ENCODE measurements at regions of chr14 and their contacts with region 1.

Region 1: DNA sequence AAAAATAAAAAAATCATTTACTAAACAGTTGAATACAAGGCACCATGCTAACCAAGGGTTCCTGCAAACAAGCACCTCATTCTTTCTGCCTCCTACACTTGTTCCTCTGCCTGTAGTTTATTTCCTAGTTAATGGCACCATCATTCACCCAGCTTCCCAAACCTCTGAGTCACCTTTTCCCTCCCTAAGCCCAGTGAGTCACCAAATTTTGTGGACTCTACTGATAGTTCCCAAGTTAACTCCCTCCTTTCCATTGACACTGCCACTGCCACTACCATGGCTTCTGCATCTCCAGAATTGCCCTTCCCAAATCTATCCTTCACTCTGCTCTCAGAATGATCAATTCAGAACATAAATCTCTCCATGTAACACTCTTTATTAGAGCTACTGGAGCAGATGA is 2.0 kb upstream of the GARIN2 start:
- DNase-seq: peak; percentile 55
- H3K4me3 ChIP-seq: no peak overlapping the region
- CTCF ChIP-seq: no peak

Region 2: DNA sequence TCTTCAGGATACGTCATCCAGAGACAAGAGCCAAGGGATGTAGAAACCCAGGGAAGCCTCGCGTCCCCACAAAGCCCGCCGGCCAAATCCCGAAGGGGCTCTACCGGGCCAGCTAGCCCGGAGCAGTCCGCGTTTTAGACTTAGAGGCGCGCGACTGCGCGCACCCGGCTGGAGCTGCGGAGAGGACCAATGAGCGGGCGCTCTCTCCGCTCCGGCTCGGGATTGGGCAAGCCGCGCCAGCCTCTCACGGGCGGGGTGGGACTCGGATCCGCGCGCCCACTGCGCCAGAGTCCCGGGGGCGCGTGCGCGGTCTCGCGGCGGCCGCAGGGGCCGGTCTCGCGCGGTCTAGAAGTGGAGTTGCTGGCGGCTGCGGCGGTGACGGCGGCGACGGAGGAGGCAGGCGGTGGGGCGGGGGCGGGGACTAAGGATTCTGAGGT is 53.8 kb after region 1 on chr14:
- in situ Hi-C with region 1: loop called (anchors 10 kb)
- DNase-seq: peak; percentile 92
- H3K4me3 ChIP-seq: peak overlapping the region; percentile 78
- CTCF ChIP-seq: no peak

Region 3: DNA sequence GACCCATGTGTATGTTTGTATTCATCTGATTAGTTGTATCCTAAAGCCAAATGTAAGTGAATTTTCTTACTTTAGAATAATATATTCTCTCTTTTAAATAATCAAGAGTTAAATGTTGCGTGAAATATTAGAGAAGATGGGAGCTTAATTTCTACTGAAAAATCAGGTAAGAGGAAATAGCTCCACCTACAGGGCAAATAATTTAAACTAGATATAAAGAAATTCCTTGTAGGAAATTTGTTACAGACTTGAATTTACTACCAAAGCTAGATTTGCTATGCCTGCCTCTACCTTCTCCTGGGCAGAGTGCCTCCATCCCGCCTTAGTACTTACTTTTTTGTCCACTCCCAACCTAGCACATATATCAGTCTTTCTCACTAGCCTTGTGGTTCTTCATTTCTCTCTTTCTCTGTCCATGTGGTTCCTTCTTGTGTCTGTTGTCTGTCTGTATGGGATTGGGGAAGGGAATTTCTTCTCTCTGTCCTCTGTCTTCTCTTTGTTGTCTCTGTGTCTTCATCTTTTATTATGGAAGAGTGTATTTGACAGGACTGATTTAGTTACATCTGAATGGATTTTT is 98.8 kb after region 1 on chr14:
- in situ Hi-C with region 1: loop called (anchors 5 kb)
- DNase-seq: peak; percentile 55
- H3K4me3 ChIP-seq: no peak overlapping the region
- CTCF ChIP-seq: peak; percentile 13

Measured in astrocyte of the cerebellum (primary cell).